GM12878 (cell line): ENCODE measurements at regions of chr14 and their contacts with region 1.

Region 1: GRCh38 chr14:91418387-91419043 is 895 bp upstream of the CCDC88C start:
- DNase-seq: no peak
- ATAC-seq: peak; percentile 49
- H3K4me3 ChIP-seq: peak overlapping the region; percentile 43
- H3K27ac ChIP-seq: peak overlapping the region; percentile 61
- H3K4me1 ChIP-seq: peaks cover 26% of the 10 kb centered on the region
- H3K27me3 ChIP-seq: no peaks in the 10 kb centered on the region
- CTCF ChIP-seq: peak; percentile 98 to 99 (median 99); a peak in 5 of 6 replicates
- EP300 ChIP-seq: no peak
- POLR2A ChIP-seq: no peak
- RAD21 ChIP-seq: peak; percentile 96

Region 2: DNA sequence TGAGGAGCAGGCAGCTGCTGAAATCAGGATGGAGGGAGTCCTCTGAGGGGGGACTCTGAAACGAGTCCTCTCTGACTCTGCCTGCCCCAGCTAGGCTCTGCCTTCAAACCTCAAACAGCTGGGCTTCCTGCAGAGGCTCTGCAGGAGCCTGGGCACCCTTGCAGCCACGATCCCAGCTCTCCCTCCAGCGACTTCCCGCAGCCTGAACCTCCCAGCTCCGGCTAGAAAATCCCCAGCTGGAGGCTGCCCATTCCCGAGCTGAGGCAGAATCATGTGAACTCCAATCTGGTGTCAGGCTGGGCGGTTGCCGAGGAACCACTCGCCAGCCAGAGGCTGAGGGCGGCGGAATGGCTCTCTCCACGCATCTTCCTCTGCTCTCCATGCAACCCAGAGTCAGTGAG is 174.0 kb before region 1 on chr14 and contains the start of gene GPR68:
- CTCF ChIA-PET with region 1: interaction called, 3 read pairs
- POLR2A ChIA-PET with region 1: interaction called, 3 read pairs
- RAD21 ChIA-PET with region 1: interaction called, 7 read pairs
- SMC1A ChIA-PET with region 1: interaction called, 7 read pairs
- in situ Hi-C with region 1: no loop called
- intact Hi-C with region 1: loop called (anchors 5 kb)
- DNase-seq: no peak
- ATAC-seq: 0 out of 3 replicates have a peak, but pooled peaks have one; percentile 2
- H3K4me3 ChIP-seq: peak within 1 kb of the TSS; percentile 16
- H3K27ac ChIP-seq: peak within 1 kb of the TSS; percentile 86
- H3K4me1 ChIP-seq: peaks cover 32% of the 10 kb centered on the region
- H3K27me3 ChIP-seq: no peaks in the 10 kb centered on the region
- CTCF ChIP-seq: no peak
- EP300 ChIP-seq: no peak
- POLR2A ChIP-seq: no peak
- RAD21 ChIP-seq: no peak
- polyA plus RNA-seq, gene GPR68: 0.06 to 0.35 TPM

Region 3: DNA sequence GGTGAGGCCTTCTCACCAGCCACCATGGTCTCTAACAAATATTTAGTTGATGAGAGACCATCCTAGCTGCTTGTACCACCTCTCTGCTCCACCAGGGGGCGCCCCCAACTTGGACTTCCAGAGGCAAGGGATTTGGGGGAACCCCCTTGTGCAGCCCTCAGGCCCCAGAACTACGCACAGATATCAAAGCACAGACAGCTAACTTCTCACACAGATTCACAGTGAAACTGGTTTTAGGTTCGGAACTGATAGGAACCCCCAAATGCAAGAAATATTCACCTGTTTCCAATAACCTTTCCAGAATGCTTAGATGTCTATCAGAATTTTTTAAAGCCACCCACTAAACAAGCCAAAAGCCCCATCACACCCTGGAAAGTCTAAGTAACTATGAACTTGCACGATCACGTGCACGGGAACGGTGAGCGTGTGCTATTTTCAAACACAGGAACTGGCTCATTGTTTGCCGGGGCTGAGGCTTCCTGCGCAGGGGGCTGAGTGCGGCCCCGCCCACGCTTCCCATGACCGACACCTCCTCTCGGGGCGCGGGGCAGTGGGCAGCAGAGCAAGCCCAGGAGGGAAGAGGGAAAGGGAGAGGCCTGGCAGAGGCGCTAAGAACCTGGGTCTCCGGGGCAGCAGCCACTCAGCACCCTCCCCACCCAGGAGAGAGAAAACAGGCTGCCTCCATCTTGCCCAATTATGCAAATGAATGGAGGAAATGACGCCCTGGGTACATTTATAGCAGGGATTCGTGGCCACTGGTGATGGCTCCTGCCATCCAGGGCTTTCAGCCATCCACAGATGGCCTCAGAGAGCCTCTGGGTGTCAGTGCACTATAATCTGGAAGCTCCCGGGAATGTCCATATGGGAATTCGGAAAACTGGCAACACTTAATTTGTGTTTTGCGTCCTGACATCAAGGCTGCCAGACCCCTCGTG is 94.6 kb before region 1 on chr14:
- CTCF ChIA-PET with region 1: interaction called, 242 read pairs
- POLR2A ChIA-PET with region 1: interaction called, 11 read pairs
- RAD21 ChIA-PET with region 1: interaction called, 160 read pairs
- SMC1A ChIA-PET with region 1: interaction called, 210 read pairs
- in situ Hi-C with region 1: loop called (anchors 5 kb)
- intact Hi-C with region 1: loop called (anchors 1 kb)
- DNase-seq: peak; percentile 75
- ATAC-seq: peak; percentile 89
- H3K4me3 ChIP-seq: peak overlapping the region; percentile 11; the same call in 1 of the 2 replicates
- H3K27ac ChIP-seq: peak overlapping the region; percentile 87
- H3K4me1 ChIP-seq: peaks cover 39% of the 10 kb centered on the region
- H3K27me3 ChIP-seq: no peaks in the 10 kb centered on the region
- CTCF ChIP-seq: peak; percentile 95 to 97 (median 96)
- EP300 ChIP-seq: peak; percentile 29 to 30; a peak in 2 of 4 replicates
- POLR2A ChIP-seq: peak; percentile 66
- RAD21 ChIP-seq: peak; percentile 98

Region 4: GRCh38 chr14:91350813-91351511 is 67.6 kb before region 1 on chr14:
- CTCF ChIA-PET with region 1: interaction called, 70 read pairs
- POLR2A ChIA-PET with region 1: interaction called, 140 read pairs
- RAD21 ChIA-PET with region 1: interaction called, 236 read pairs
- SMC1A ChIA-PET with region 1: interaction called, 205 read pairs
- in situ Hi-C with region 1: no loop called
- intact Hi-C with region 1: loop called (anchors 1 kb)
- DNase-seq: peak; percentile 91
- ATAC-seq: peak; percentile 66
- H3K4me3 ChIP-seq: peak overlapping the region; percentile 38
- H3K27ac ChIP-seq: peak overlapping the region; percentile 98
- H3K4me1 ChIP-seq: peaks cover 78% of the 10 kb centered on the region
- H3K27me3 ChIP-seq: no peaks in the 10 kb centered on the region
- CTCF ChIP-seq: no peak
- EP300 ChIP-seq: peak; percentile 75 to 83
- POLR2A ChIP-seq: peak; percentile 62
- RAD21 ChIP-seq: no peak

Region 5: GRCh38 chr14:91367173-91368171 is 51.0 kb before region 1 on chr14:
- CTCF ChIA-PET with region 1: interaction called, 35 read pairs
- POLR2A ChIA-PET with region 1: interaction called, 42 read pairs
- RAD21 ChIA-PET with region 1: interaction called, 104 read pairs
- SMC1A ChIA-PET with region 1: interaction called, 172 read pairs
- in situ Hi-C with region 1: no loop called
- intact Hi-C with region 1: loop called (anchors 2 kb)
- DNase-seq: peak; percentile 82
- ATAC-seq: peak; percentile 61
- H3K4me3 ChIP-seq: peak overlapping the region; percentile 61; the same call in 1 of the 2 replicates
- H3K27ac ChIP-seq: peak overlapping the region; percentile 85
- H3K4me1 ChIP-seq: peaks cover 96% of the 10 kb centered on the region
- H3K27me3 ChIP-seq: no peaks in the 10 kb centered on the region
- CTCF ChIP-seq: no peak
- EP300 ChIP-seq: peak; percentile 93 to 98
- POLR2A ChIP-seq: peak; percentile 53; the same call in 1 of the 2 replicates
- RAD21 ChIP-seq: no peak

Region 6: DNA sequence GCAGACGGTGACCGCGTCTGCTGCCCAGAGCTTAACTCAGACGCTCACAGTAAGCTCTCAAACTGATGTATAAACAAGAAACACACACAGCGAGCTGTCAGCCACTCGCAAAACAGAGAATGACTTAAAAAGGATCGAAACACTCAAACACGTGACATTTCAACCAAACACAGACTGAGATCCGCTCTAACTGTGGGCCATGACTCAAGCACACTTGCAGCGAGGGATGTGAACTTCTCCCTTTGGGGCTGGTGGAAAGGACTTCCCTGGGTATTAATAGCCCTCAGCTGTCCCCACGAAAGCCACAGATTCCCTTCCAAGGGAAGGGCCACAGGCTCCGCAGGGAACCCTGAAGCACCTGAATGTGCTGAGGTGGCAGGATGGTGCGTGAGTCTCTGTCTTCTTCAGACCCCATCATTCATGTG is 30.0 kb before region 1 on chr14:
- CTCF ChIA-PET with region 1: interaction called, 4 read pairs
- POLR2A ChIA-PET with region 1: interaction called, 9 read pairs
- RAD21 ChIA-PET with region 1: interaction called, 7 read pairs
- SMC1A ChIA-PET with region 1: interaction called, 11 read pairs
- in situ Hi-C with region 1: no loop called
- intact Hi-C with region 1: no loop called
- DNase-seq: no peak
- ATAC-seq: peak; percentile 85
- H3K4me3 ChIP-seq: no peak overlapping the region; the same call in 1 of the 2 replicates
- H3K27ac ChIP-seq: peak overlapping the region; percentile 88
- H3K4me1 ChIP-seq: peaks cover 61% of the 10 kb centered on the region
- H3K27me3 ChIP-seq: no peaks in the 10 kb centered on the region
- CTCF ChIP-seq: no peak
- EP300 ChIP-seq: no peak
- POLR2A ChIP-seq: no peak
- RAD21 ChIP-seq: no peak

Region 7: GRCh38 chr14:91466192-91466591 is 47.7 kb after region 1 on chr14:
- CTCF ChIA-PET with region 1: no interaction called
- POLR2A ChIA-PET with region 1: no interaction called
- RAD21 ChIA-PET with region 1: no interaction called
- SMC1A ChIA-PET with region 1: no interaction called
- in situ Hi-C with region 1: no loop called
- intact Hi-C with region 1: no loop called
- DNase-seq: no peak
- ATAC-seq: no peak
- H3K4me3 ChIP-seq: no peak overlapping the region
- H3K27ac ChIP-seq: no peak overlapping the region
- H3K4me1 ChIP-seq: peaks cover 9% of the 10 kb centered on the region
- H3K27me3 ChIP-seq: no peaks in the 10 kb centered on the region
- CTCF ChIP-seq: no peak
- EP300 ChIP-seq: no peak
- POLR2A ChIP-seq: no peak
- RAD21 ChIP-seq: no peak

Region 8: GRCh38 chr14:91536327-91536726 is 117.8 kb after region 1 on chr14:
- CTCF ChIA-PET with region 1: no interaction called
- POLR2A ChIA-PET with region 1: no interaction called
- RAD21 ChIA-PET with region 1: no interaction called
- SMC1A ChIA-PET with region 1: no interaction called
- in situ Hi-C with region 1: no loop called
- intact Hi-C with region 1: no loop called
- DNase-seq: no peak
- ATAC-seq: no peak
- H3K4me3 ChIP-seq: no peak overlapping the region
- H3K27ac ChIP-seq: no peak overlapping the region
- H3K4me1 ChIP-seq: no peaks in the 10 kb centered on the region
- H3K27me3 ChIP-seq: no peaks in the 10 kb centered on the region; a peak in 2 of 4 replicates
- CTCF ChIP-seq: no peak
- EP300 ChIP-seq: no peak
- POLR2A ChIP-seq: no peak
- RAD21 ChIP-seq: no peak